ENCODE measurements at regions of chr2 and their contacts with region 1.

Region 1: GRCh38 chr2:150472511-150472899 is 15.0 kb downstream of the RND3 start:
- DNase-seq: no peak
- ATAC-seq: peak; percentile 85
- H3K4me3 ChIP-seq: no peak overlapping the region
- H3K27ac ChIP-seq: no peak overlapping the region
- H3K4me1 ChIP-seq: no peaks in the 10 kb centered on the region
- H3K27me3 ChIP-seq: no peaks in the 10 kb centered on the region; a peak in 1 of 4 replicates
- CTCF ChIP-seq: no peak
- EP300 ChIP-seq: peak in 1 of 2 experiments; percentile 26; a peak in 1 of 4 replicates
- POLR2A ChIP-seq: no peak
- RAD21 ChIP-seq: no peak

Region 2: GRCh38 chr2:150133623-150134022 is 338.9 kb before region 1 on chr2:
- CTCF ChIA-PET with region 1: no interaction called
- POLR2A ChIA-PET with region 1: no interaction called
- RAD21 ChIA-PET with region 1: no interaction called
- SMC1A ChIA-PET with region 1: no interaction called
- in situ Hi-C with region 1: no loop called
- intact Hi-C with region 1: loop called (anchors 5 kb)
- DNase-seq: peak; percentile 62
- ATAC-seq: peak; percentile 97
- H3K4me3 ChIP-seq: no peak overlapping the region
- H3K27ac ChIP-seq: no peak overlapping the region
- H3K4me1 ChIP-seq: no peaks in the 10 kb centered on the region
- H3K27me3 ChIP-seq: no peaks in the 10 kb centered on the region
- CTCF ChIP-seq: no peak
- EP300 ChIP-seq: peak; percentile 91 to 93
- POLR2A ChIP-seq: no peak
- RAD21 ChIP-seq: no peak

Region 3: GRCh38 chr2:150425121-150425955 is 47.2 kb before region 1 on chr2:
- CTCF ChIA-PET with region 1: interaction called, 21 read pairs
- POLR2A ChIA-PET with region 1: interaction called, 4 read pairs
- RAD21 ChIA-PET with region 1: interaction called, 14 read pairs
- SMC1A ChIA-PET with region 1: interaction called, 21 read pairs
- in situ Hi-C with region 1: no loop called
- intact Hi-C with region 1: no loop called
- DNase-seq: no peak
- ATAC-seq: peak; percentile 51
- H3K4me3 ChIP-seq: no peak overlapping the region
- H3K27ac ChIP-seq: no peak overlapping the region
- H3K4me1 ChIP-seq: no peaks in the 10 kb centered on the region
- H3K27me3 ChIP-seq: no peaks in the 10 kb centered on the region
- CTCF ChIP-seq: no peak
- EP300 ChIP-seq: no peak
- POLR2A ChIP-seq: no peak
- RAD21 ChIP-seq: no peak

Region 4: GRCh38 chr2:150459281-150459680 is 13.2 kb before region 1 on chr2:
- CTCF ChIA-PET with region 1: interaction called, 7 read pairs
- POLR2A ChIA-PET with region 1: interaction called, 4 read pairs
- RAD21 ChIA-PET with region 1: interaction called, 7 read pairs
- SMC1A ChIA-PET with region 1: interaction called, 12 read pairs
- in situ Hi-C with region 1: no loop called
- intact Hi-C with region 1: no loop called
- DNase-seq: no peak
- ATAC-seq: no peak
- H3K4me3 ChIP-seq: no peak overlapping the region
- H3K27ac ChIP-seq: no peak overlapping the region
- H3K4me1 ChIP-seq: no peaks in the 10 kb centered on the region
- H3K27me3 ChIP-seq: no peaks in the 10 kb centered on the region
- CTCF ChIP-seq: no peak
- EP300 ChIP-seq: no peak
- POLR2A ChIP-seq: no peak
- RAD21 ChIP-seq: no peak